Head of caudate nucleus (tissue), 42 donors: ENCODE measurements at regions of chr13 and their contacts with region 1.

Region 1: DNA sequence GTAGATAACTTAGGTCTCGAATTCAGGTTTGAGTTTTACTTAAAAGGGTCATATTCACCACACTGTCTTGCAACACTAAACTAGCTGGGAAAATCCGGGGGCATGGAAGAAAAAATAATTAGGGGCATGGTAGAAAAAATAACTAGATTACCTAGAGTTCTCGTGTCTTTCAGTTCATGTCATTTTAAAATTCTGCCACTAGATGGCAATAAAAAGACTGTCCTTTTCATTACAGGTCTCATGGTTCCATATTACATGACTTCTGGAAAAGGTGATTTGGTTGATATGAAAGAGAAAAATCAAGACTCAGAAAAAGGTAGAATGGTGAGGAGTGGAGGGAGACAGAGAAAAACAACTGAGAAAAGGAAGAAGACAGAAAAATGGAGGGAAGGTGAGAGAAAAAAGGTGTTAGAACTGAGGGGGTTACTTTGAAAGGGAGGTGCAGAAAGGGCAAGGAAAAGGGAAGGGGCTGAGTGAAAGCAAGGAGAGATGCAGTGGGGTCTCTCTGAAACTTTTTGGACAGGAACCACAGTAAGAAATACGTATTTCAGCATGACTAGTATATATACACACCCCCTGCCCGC is 299.0 kb downstream of the KLF12 start:
- DNase-seq: no peak

Region 2: GRCh38 chr13:75236774-75237173 is 1401.5 kb after region 1 on chr13:
- intact Hi-C with region 1: loop called (anchors 10 kb)
- DNase-seq: peak in 2 of 42 donors; percentile 17 to 32